Sigmoid colon (tissue), 7 donors: ENCODE measurements at regions of chr7 and their contacts with region 1.

Region 1: GRCh38 chr7:43729214-43729923 is at the start of gene COA1:
- DNase-seq: peak; percentile 92
- H3K4me3 ChIP-seq: peak within 1 kb of the TSS; percentile 61 to 93 (median 76)
- H3K27ac ChIP-seq: peak within 1 kb of the TSS; percentile 86 to 89 (median 86)
- H3K4me1 ChIP-seq: peaks cover 0 to 36% (median 35%) of the 10 kb centered on the region in 4 donors
- H3K27me3 ChIP-seq: no peaks in the 10 kb centered on the region
- CTCF ChIP-seq: peak in 2 of 4 experiments; percentile 16 to 18
- EP300 ChIP-seq: peak in 1 of 4 donors; percentile 51
- POLR2A ChIP-seq: peak in 1 of 2 donors; percentile 25
- total RNA-seq, gene COA1: 36.0 to 61.2 (median 42.9) TPM

Region 2: DNA sequence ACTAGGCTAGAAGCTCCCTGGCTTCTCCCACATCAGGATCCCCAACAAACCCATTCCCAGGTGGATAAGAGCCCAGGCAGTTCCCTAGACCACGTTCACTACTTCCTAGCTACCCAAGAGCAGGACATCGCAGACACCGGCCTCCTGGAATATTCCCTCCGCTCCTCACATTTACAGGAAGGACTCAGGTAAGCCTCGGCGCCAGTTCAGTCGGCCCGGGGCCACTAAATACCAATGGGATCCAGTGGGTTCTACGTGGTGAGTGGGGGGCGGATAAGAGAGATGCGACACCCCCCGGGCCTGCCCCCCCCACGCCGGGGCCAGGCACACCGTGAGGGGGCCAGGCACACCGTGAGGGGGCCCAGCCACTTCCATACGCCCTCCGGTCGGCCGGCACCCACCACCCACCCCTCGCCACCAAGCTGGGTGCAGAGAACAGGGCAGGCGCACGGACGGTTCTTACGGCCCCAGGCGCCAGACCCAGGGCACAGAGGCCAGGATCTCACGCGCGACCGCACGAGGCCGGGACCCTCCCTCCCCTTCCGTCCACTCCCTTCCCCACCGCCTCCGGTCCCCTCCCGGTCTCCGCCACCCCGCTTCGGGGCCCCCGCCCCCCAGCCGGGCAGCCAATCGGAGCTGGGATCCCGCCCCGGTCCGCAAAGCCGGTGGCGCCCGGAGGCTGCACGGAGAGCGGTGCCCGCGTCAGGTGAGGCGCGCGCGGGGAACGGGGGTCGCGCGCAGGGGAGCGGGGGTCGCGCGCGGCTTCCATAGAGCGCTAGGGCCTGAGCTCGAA is 28.9 kb after region 1 on chr7 and contains the start of gene BLVRA:
- intact Hi-C with region 1: loop called (anchors 1 kb)
- DNase-seq: peak; percentile 85
- H3K4me3 ChIP-seq: peak within 1 kb of the TSS; percentile 56 to 97 (median 82)
- H3K27ac ChIP-seq: peak within 1 kb of the TSS; percentile 81 to 91 (median 84)
- H3K4me1 ChIP-seq: peaks cover 0 to 28% (median 21%) of the 10 kb centered on the region in 4 donors
- H3K27me3 ChIP-seq: no peaks in the 10 kb centered on the region
- CTCF ChIP-seq: no peak
- EP300 ChIP-seq: no peak
- POLR2A ChIP-seq: peak in 1 of 2 donors; percentile 21
- total RNA-seq, gene BLVRA: 60.4 to 105 (median 94.0) TPM

Region 3: GRCh38 chr7:43834463-43835251 is 105.3 kb after region 1 on chr7:
- intact Hi-C with region 1: loop called (anchors 2 kb)
- DNase-seq: no peak
- H3K4me3 ChIP-seq: peak overlapping the region in 1 of 4 donors; percentile 16
- H3K27ac ChIP-seq: no peak overlapping the region
- H3K4me1 ChIP-seq: peaks cover 0 to 5% (median 2%) of the 10 kb centered on the region in 4 donors
- H3K27me3 ChIP-seq: no peaks in the 10 kb centered on the region
- CTCF ChIP-seq: no peak
- EP300 ChIP-seq: no peak
- POLR2A ChIP-seq: no peak